GM23248 (cell line): ENCODE measurements at regions of chr1 and their contacts with region 1.

Region 1: GRCh38 chr1:115609021-115609420 is 32.7 kb upstream of the VANGL1 start:
- DNase-seq: no peak
- H3K4me3 ChIP-seq: no peak overlapping the region
- H3K27ac ChIP-seq: no peak overlapping the region
- H3K4me1 ChIP-seq: no peaks in the 10 kb centered on the region
- H3K27me3 ChIP-seq: peaks cover 22% of the 10 kb centered on the region; the same call in 1 of the 2 replicates

Region 2: DNA sequence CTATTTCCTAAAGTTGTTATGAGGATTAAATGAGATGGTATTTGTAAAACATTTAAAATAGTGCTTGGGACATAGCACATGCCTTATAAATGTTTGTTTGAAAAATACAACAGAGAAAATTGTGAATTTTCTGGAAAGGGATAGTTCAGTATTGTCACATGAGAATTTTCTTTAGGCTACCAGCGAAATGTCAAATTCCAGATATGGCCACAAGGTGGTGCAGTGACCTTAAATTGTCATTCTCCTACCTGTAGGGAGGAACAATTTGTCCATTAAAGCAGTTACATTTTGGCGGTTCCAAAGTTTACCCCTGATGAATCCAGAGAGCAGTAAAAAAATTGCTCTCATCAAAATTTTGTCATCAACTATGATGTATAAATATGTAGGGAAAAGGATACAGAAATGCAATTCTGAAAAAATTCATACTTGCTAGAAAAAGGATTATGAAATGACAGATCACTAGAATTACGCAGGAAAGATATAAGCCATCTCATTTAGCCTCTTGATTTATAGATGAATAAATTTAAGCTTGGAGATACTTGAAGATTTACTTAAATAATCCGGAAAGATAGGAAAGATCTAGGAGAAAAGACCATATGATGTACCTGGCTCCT is 629.6 kb before region 1 on chr1:
- in situ Hi-C with region 1: loop called (anchors 10 kb)
- DNase-seq: peak; percentile 47
- H3K4me3 ChIP-seq: no peak overlapping the region
- H3K27ac ChIP-seq: no peak overlapping the region
- H3K4me1 ChIP-seq: no peaks in the 10 kb centered on the region
- H3K27me3 ChIP-seq: no peaks in the 10 kb centered on the region

Region 3: DNA sequence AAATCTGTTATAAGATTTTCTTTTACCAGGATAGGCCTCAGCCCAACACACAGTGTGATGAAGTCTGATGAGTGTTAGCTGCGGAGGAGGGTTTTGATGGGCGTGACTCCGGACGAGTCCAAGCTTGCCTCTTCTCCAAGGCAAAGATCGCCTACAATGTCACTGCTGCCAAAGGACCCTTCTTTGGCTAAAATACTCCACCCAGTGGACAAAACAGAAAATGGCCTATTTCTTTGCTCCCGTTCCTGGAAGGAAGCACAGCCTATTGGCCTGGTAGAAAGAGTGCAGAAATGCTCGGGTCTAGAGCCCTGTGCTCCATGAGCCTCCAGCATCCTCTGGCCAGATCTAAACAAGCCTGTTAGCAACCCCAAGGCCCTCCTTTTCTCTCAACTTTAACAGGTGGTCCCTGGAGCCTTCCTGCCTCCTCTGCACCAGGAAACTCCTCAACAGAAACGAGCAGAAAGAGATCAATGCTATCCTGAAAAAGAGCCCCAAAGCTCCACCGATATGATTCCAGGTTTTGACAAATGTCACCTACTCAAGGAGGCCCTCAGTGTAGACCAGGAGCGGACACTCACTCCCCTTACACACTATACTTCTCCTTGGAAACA is 162.9 kb after region 1 on chr1:
- in situ Hi-C with region 1: loop called (anchors 10 kb)
- DNase-seq: peak; percentile 94
- H3K4me3 ChIP-seq: no peak overlapping the region; the same call in 1 of the 2 replicates
- H3K27ac ChIP-seq: no peak overlapping the region
- H3K4me1 ChIP-seq: peaks cover 5% of the 10 kb centered on the region
- H3K27me3 ChIP-seq: no peaks in the 10 kb centered on the region